ENCODE measurements at regions of chr5 and their contacts with region 1.

Region 1: GRCh38 chr5:66757188-66757833 is 161.1 kb downstream of the MAST4 start:
- DNase-seq: peak; percentile 50
- H3K4me3 ChIP-seq: no peak overlapping the region
- H3K27ac ChIP-seq: no peak overlapping the region
- H3K4me1 ChIP-seq: no peaks in the 10 kb centered on the region; a peak in 1 of 4 replicates
- H3K27me3 ChIP-seq: no peaks in the 10 kb centered on the region; the same call in 1 of the 2 replicates
- CTCF ChIP-seq: peak; percentile 65
- EP300 ChIP-seq: no peak
- RAD21 ChIP-seq: peak; percentile 87

Region 2: GRCh38 chr5:66450988-66451387 is 306.3 kb before region 1 on chr5:
- CTCF ChIA-PET with region 1: no interaction called
- POLR2A ChIA-PET with region 1: no interaction called
- DNase-seq: no peak
- H3K4me3 ChIP-seq: no peak overlapping the region
- H3K27ac ChIP-seq: no peak overlapping the region
- H3K4me1 ChIP-seq: no peaks in the 10 kb centered on the region
- H3K27me3 ChIP-seq: no peaks in the 10 kb centered on the region
- CTCF ChIP-seq: no peak
- EP300 ChIP-seq: no peak
- RAD21 ChIP-seq: no peak

Region 3: DNA sequence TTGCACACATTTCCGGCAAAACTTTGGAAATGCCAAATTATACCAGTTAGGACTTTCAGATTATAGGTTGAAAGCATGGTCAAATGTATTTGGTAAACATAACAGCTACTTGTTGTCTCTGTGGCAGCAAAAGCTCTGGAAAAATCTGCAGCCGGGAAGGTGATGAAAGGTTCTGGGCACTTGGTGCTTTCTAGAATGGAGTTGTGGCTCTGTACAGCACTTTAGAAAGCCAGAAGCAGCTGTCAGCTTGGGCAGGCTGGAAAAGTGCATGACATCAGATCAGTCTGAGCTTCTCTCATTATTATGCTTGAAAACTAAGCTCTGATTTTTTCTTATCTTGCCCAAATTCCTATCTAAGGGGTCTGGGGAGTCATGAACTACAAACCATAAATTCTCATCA is 279.7 kb before region 1 on chr5:
- CTCF ChIA-PET with region 1: no interaction called
- POLR2A ChIA-PET with region 1: no interaction called
- DNase-seq: no peak
- H3K4me3 ChIP-seq: no peak overlapping the region
- H3K27ac ChIP-seq: no peak overlapping the region
- H3K4me1 ChIP-seq: no peaks in the 10 kb centered on the region
- H3K27me3 ChIP-seq: no peaks in the 10 kb centered on the region
- CTCF ChIP-seq: no peak
- EP300 ChIP-seq: no peak
- RAD21 ChIP-seq: no peak

Region 4: DNA sequence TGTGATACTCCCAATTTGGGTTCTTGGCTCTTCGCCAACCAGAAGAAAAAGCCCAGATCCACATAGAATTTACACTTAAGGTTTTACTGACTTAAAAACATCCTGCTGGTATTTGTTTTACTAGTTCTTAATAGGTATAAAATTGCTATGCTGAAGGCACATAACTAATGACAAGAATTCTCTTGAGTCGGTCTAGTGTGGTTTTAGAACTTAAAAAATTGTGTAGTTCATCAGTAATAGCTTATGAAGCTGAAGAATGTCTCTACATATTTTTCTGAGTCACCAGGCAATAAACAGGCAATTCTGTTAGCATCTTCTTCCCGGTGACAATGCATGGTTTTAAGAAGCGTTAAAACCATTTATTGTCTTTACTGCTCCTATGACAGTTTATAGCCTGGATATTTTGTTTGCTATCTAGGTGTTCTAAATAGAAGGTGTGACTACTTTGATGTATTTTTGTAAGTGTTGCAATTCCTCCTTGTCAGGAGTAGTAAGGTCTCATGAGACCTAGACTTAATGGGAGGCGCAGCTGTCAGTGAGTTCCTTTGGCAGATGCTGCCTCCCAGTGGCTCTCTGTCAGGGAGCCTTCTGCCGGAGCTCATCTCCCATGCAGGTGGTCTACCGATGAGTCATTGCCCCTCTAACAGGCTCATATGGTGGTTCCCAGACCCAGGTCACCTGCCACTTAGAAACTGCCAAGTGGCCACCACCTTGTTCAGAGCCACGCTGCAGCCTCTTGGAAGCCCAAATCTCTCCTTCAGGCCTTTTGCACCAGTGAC is 12.7 kb after region 1 on chr5:
- CTCF ChIA-PET with region 1: interaction called, 16 read pairs
- POLR2A ChIA-PET with region 1: no interaction called
- DNase-seq: peak; percentile 29
- H3K4me3 ChIP-seq: no peak overlapping the region
- H3K27ac ChIP-seq: no peak overlapping the region
- H3K4me1 ChIP-seq: no peaks in the 10 kb centered on the region
- H3K27me3 ChIP-seq: no peaks in the 10 kb centered on the region
- CTCF ChIP-seq: no peak
- EP300 ChIP-seq: no peak
- RAD21 ChIP-seq: peak; percentile 63

Region 5: GRCh38 chr5:66840511-66841013 is 83.3 kb after region 1 on chr5:
- CTCF ChIA-PET with region 1: no interaction called
- POLR2A ChIA-PET with region 1: no interaction called
- DNase-seq: no peak
- H3K4me3 ChIP-seq: no peak overlapping the region
- H3K27ac ChIP-seq: no peak overlapping the region
- H3K4me1 ChIP-seq: peaks cover 0 to 2% of the 10 kb centered on the region in 2 experiments; a peak in 2 of 4 replicates
- H3K27me3 ChIP-seq: no peaks in the 10 kb centered on the region
- CTCF ChIP-seq: no peak
- EP300 ChIP-seq: no peak
- RAD21 ChIP-seq: no peak

Measured in SK-N-SH (cell line).